PC-9 (cell line): ENCODE measurements at regions of chr4 and their contacts with region 1.

Region 1: DNA sequence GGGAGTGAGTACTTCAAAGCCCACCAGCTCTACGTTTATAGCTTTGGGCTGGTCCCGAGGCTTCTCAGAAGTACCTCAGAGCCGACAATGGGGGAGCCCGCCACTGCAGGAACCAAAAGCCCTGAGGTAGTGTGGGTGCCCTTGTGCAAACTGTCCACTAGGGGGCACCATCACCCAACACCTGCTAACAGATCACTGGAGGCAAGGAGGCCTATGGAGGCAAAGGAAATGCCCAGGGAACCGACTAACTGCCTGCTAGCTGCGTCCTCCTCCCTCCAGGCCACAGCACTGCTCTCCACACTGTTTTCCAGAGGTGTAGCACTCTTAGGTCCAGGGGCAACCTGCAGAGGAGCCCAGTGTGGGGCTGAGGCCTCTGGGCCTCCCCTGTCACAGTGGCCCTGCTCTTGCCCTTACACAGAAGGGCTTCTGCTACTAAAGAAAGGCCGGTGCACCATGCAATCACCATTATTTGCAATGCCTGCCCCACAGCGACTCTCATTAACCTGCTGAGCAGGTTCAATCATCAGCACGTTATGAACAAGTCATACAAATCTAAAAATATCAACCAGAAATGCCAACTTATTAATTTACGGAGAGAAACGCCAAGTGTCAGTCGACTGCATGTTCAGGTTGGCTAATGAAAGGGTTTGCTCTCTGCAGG is 159.1 kb downstream of the NSUN7 start:
- DNase-seq: peak; percentile 41 to 80
- H3K4me3 ChIP-seq: no peak overlapping the region
- H3K27ac ChIP-seq: no peak overlapping the region
- H3K4me1 ChIP-seq: peaks cover 10% of the 10 kb centered on the region; the same call in 1 of the 2 replicates
- H3K27me3 ChIP-seq: no peaks in the 10 kb centered on the region
- CTCF ChIP-seq: peak; percentile 92

Region 2: DNA sequence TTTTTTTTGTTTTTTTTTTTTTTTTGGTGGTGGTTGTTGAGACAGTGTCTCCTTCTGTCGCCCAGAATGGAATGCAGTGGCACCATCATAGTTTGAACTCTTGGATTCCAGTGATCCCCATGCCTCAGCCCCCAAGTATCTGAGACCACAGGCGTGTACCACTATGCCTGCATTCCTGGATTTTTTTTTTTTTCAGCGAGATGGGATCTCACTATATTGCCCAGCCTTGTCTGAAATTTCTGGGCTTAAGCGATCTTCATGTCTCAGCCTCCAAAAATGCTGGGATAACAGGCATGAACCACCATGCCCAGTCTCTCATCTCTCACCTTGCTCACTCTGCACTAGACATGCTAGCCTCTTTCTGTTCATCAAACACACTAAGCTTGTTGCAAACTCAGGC is 1106.9 kb before region 1 on chr4:
- CTCF ChIA-PET with region 1: interaction called, 13 read pairs
- POLR2A ChIA-PET with region 1: no interaction called
- intact Hi-C with region 1: no loop called
- DNase-seq: no peak
- H3K4me3 ChIP-seq: no peak overlapping the region
- H3K27ac ChIP-seq: no peak overlapping the region
- H3K4me1 ChIP-seq: no peaks in the 10 kb centered on the region
- H3K27me3 ChIP-seq: no peaks in the 10 kb centered on the region
- CTCF ChIP-seq: no peak

Region 3: GRCh38 chr4:40656201-40656901 is 252.5 kb before region 1 on chr4:
- CTCF ChIA-PET with region 1: no interaction called
- POLR2A ChIA-PET with region 1: no interaction called
- intact Hi-C with region 1: no loop called
- DNase-seq: no peak
- H3K4me3 ChIP-seq: no peak overlapping the region
- H3K27ac ChIP-seq: no peak overlapping the region
- H3K4me1 ChIP-seq: peaks cover 13% of the 10 kb centered on the region
- H3K27me3 ChIP-seq: no peaks in the 10 kb centered on the region
- CTCF ChIP-seq: no peak

Region 4: DNA sequence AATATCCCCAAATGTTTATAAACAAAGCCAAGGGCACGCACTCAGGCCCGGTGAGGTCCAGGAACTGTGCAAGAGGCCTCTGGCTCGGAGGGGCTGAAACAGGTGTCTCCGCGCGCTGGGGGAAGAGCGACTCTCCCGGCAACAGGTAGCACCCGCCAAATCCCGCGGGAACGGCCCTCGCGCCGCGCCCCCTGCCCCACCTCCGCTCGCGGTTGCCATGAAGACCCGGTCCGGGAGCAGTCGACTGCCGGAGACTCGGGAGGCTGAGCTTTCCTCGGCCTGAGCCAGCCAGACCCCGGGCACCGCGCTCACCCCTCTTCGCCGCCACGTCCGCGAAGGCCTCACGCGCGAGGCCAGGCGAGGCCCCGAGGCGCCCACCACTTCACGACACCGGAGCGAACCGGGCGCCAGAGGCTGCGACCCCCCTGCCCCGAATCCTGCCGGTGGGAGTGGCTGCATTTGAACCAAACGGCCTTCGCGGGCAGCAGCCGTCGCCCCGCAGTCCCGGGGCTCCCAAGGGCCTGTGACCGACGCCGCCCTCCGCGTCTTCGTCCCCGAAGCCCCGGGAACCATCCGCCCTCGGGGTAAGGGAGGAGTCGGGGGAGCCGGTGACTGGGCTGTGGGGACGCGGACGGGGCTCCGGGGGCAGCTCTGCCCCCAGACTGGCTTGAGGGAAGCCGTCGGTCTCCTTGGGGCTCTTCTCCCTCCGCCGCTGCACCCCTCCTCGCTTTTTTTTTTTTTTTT is 158.9 kb before region 1 on chr4 and contains the start of gene NSUN7:
- CTCF ChIA-PET with region 1: no interaction called
- POLR2A ChIA-PET with region 1: no interaction called
- intact Hi-C with region 1: loop called (anchors 5 kb)
- DNase-seq: peak; percentile 82 to 90
- H3K4me3 ChIP-seq: peak within 1 kb of the TSS; percentile 79
- H3K27ac ChIP-seq: peak within 1 kb of the TSS; percentile 55
- H3K4me1 ChIP-seq: peaks cover 18% of the 10 kb centered on the region
- H3K27me3 ChIP-seq: no peaks in the 10 kb centered on the region
- CTCF ChIP-seq: no peak
- total RNA-seq, gene NSUN7: 16.8 and 18.5 TPM in 2 replicates